PC-9 (cell line): ENCODE measurements at regions of chr4 and their contacts with region 1.

Region 1: DNA sequence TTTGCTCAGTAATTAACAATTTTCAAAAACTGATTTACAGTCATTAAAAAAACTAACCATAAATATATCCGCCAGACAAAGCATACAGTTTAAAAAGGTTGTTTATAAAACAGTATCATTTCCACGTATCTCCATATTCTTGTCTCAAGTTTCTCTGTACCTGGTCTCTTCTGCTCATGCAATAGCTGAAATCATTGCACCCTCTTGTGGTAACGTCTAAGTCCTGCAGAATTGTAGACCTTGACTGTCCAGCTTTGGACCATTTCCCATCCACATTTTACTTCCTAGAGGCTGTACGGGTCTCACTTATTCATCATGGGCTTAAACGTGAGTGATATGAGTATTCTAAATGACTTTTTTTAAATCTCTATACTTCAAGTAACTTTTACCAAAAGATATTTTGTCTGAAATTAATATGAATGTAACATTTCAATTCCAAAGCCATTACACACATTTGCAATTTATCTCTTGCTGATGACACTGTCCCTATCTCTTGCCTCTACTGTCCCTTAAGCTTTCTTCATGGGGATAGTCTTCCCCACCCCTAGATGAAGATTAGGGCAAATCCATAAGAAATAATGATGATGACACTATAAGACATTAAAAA is 118.5 kb downstream of the BTC start:
- DNase-seq: no peak
- H3K4me3 ChIP-seq: no peak overlapping the region
- H3K27ac ChIP-seq: no peak overlapping the region
- H3K4me1 ChIP-seq: peaks cover 6% of the 10 kb centered on the region; the same call in 1 of the 2 replicates
- H3K27me3 ChIP-seq: no peaks in the 10 kb centered on the region
- CTCF ChIP-seq: peak; percentile 75

Region 2: DNA sequence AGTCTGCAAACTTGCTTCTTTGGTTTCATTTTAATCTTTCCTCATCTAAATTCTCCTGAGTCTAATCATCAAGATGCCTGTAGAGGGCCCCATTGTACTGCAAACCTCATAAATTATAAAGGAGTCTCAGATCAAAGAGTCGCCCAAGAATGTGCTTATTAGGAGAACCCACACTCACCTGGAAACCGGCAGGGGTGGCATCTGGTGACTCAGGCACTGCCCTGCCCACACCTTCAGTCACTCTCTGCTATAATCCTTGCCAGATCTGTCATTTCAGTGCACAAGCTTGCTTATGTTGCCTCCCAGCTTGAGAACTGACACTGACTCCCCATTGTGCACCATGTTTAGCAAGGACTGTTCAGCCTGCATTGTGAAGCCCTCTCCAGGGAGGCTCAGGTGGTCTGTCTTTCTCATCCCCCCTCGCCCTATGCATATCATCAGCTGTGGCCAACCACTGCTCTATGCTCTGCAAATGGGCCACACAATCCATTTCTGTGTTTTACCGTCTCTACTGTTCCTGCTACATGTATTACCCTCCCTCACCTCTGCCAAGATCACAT is 355.1 kb before region 1 on chr4:
- CTCF ChIA-PET with region 1: interaction called, 6 read pairs
- POLR2A ChIA-PET with region 1: interaction called, 3 read pairs
- intact Hi-C with region 1: loop called (anchors 1 kb)
- DNase-seq: peak; percentile 80 to 91
- H3K4me3 ChIP-seq: no peak overlapping the region
- H3K27ac ChIP-seq: peak overlapping the region; percentile 30; the same call in 1 of the 2 replicates
- H3K4me1 ChIP-seq: peaks cover 12% of the 10 kb centered on the region
- H3K27me3 ChIP-seq: no peaks in the 10 kb centered on the region
- CTCF ChIP-seq: peak; percentile 74

Region 3: DNA sequence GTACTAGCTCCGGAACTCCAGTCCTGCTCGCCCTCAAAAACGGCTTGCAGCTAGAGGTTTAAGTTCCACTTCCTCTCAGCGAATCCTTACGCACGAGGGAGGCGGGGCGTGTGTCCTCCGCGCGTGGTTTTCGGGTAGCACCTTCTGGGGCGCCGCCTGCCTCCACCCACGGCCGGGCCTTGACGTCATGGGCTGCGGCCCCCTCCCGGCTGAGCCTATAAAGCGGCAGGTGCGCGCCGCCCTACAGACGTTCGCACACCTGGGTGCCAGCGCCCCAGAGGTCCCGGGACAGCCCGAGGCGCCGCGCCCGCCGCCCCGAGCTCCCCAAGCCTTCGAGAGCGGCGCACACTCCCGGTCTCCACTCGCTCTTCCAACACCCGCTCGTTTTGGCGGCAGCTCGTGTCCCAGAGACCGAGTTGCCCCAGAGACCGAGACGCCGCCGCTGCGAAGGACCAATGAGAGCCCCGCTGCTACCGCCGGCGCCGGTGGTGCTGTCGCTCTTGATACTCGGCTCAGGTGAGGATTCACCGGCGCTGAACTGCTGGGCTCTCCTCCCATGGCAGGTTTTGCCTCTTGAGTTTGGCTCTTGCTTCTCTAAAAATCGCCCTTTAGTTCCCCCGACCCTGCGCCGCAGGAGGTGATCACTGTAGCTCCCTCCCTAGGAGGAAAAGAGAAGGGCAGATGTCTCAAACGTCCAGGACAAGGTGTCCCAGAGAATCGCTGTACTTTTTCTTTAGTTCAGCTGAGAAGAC is 230.7 kb before region 1 on chr4 and contains the start of gene AREG:
- CTCF ChIA-PET with region 1: no interaction called
- POLR2A ChIA-PET with region 1: interaction called, 3 read pairs
- intact Hi-C with region 1: loop called (anchors 2 kb)
- DNase-seq: peak; percentile 43 to 70
- H3K4me3 ChIP-seq: peak within 1 kb of the TSS; percentile 85
- H3K27ac ChIP-seq: peak within 1 kb of the TSS; percentile 63
- H3K4me1 ChIP-seq: peaks cover 13% of the 10 kb centered on the region
- H3K27me3 ChIP-seq: no peaks in the 10 kb centered on the region
- CTCF ChIP-seq: peak; percentile 69; the same call in 1 of the 2 replicates
- total RNA-seq, gene AREG: 4.5 and 6.4 TPM in 2 replicates

Region 4: GRCh38 chr4:74623041-74623440 is 52.7 kb before region 1 on chr4:
- CTCF ChIA-PET with region 1: interaction called, 4 read pairs
- POLR2A ChIA-PET with region 1: no interaction called
- intact Hi-C with region 1: loop called (anchors 1 kb)
- DNase-seq: no peak
- H3K4me3 ChIP-seq: no peak overlapping the region
- H3K27ac ChIP-seq: peak overlapping the region; percentile 83
- H3K4me1 ChIP-seq: peaks cover 28% of the 10 kb centered on the region
- H3K27me3 ChIP-seq: no peaks in the 10 kb centered on the region
- CTCF ChIP-seq: peak; percentile 55

Region 5: GRCh38 chr4:74793757-74794340 is 118.1 kb after region 1 on chr4:
- CTCF ChIA-PET with region 1: interaction called, 10 read pairs
- POLR2A ChIA-PET with region 1: no interaction called
- intact Hi-C with region 1: no loop called
- DNase-seq: peak; percentile 56 to 66
- H3K4me3 ChIP-seq: peak overlapping the region; percentile 91
- H3K27ac ChIP-seq: peak overlapping the region; percentile 79
- H3K4me1 ChIP-seq: peaks cover 11% of the 10 kb centered on the region
- H3K27me3 ChIP-seq: no peaks in the 10 kb centered on the region
- CTCF ChIP-seq: no peak; the same call in 1 of the 2 replicates